ENCODE measurements at regions of chr16 and their contacts with region 1.

Region 1: GRCh38 chr16:15672514-15673167 is 22.6 kb downstream of the NDE1 start:
- DNase-seq: peak; percentile 83 to 91
- ATAC-seq: peak; percentile 96 to 98 (median 97)
- H3K4me3 ChIP-seq: peak overlapping the region in 8 of 10 donors; percentile 4 to 39 (median 26)
- H3K27ac ChIP-seq: peak overlapping the region; percentile 75 to 97 (median 90)
- H3K4me1 ChIP-seq: peaks cover 11 to 34% (median 25%) of the 10 kb centered on the region in 9 donors
- H3K27me3 ChIP-seq: no peaks in the 10 kb centered on the region
- CTCF ChIP-seq: peak in 1 of 9 donors; percentile 7

Region 2: GRCh38 chr16:15643048-15643945 is 29.3 kb before region 1 on chr16 and contains the start of gene MARF1:
- intact Hi-C with region 1: loop called in 1 of 10 experiments (anchors 2 kb)
- DNase-seq: peak; percentile 99 to 100
- ATAC-seq: peak; percentile 97 to 99 (median 98)
- H3K4me3 ChIP-seq: peak within 1 kb of the TSS; percentile 65 to 97 (median 85)
- H3K27ac ChIP-seq: peak within 1 kb of the TSS; percentile 87 to 100 (median 99)
- H3K4me1 ChIP-seq: peaks cover 0 to 32% (median 26%) of the 10 kb centered on the region in 9 donors
- H3K27me3 ChIP-seq: no peaks in the 10 kb centered on the region
- CTCF ChIP-seq: peak; percentile 27 to 77 (median 52)
- total RNA-seq, gene MARF1: 39.1 to 59.1 (median 43.0) TPM

Measured in heart right ventricle (tissue), 16 donors.